ENCODE measurements at regions of chr7 and their contacts with region 1.

Region 1: GRCh38 chr7:30594549-30595435 is at the start of gene GARS1:
- DNase-seq: peak; percentile 91 to 94
- ATAC-seq: peak; percentile 98
- H3K4me3 ChIP-seq: peak within 1 kb of the TSS; percentile 98
- H3K27ac ChIP-seq: peak within 1 kb of the TSS; percentile 99
- H3K4me1 ChIP-seq: peaks cover 21% of the 10 kb centered on the region
- H3K27me3 ChIP-seq: no peaks in the 10 kb centered on the region
- CTCF ChIP-seq: no peak
- total RNA-seq, gene GARS1: 44.5 to 80.3 (median 59.1) TPM

Region 2: DNA sequence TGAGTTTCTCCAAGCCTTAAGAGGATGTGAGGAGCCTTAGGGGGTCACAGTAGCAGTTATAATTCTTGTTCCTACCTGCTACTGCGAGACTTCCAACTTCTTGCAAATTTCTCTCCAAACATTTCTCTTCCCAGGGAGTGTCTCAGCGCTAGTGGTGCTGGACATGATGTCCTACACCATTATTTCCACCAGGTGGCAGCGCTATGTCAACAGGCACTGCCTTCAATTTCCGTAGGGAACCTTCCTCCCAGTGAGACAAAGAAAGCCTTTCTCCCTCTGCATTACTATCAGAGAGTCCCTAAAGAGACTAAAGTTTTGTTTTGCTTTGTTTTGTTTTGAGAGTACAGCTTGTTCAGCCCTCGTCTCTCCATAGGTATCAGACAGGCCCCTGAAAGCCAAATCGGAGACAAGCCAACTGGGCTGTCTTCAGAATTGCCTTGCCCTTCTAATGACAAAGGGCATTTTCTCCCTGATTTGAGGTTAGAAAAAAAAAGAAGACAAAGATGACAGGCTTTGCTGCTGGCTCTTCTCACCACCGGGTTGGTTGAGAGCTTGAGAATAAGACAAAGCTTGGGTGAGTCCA is 45.9 kb before region 1 on chr7:
- intact Hi-C with region 1: loop called in 1 of 2 experiments (anchors 2 kb)
- DNase-seq: peak in 1 of 2 donors; percentile 51
- ATAC-seq: peak; percentile 75 to 83 (median 81)
- H3K4me3 ChIP-seq: no peak overlapping the region
- H3K27ac ChIP-seq: peak overlapping the region; percentile 37
- H3K4me1 ChIP-seq: peaks cover 10% of the 10 kb centered on the region
- H3K27me3 ChIP-seq: no peaks in the 10 kb centered on the region
- CTCF ChIP-seq: peak; percentile 88